ENCODE measurements at regions of chr1 and their contacts with region 1.

Region 1: GRCh38 chr1:150449451-150449850 is 37.8 kb upstream of the TARS2 start:
- DNase-seq: no peak
- ATAC-seq: no peak
- H3K4me3 ChIP-seq: no peak overlapping the region
- H3K27ac ChIP-seq: no peak overlapping the region
- H3K4me1 ChIP-seq: no peaks in the 10 kb centered on the region
- H3K27me3 ChIP-seq: no peaks in the 10 kb centered on the region
- CTCF ChIP-seq: no peak
- POLR2A ChIP-seq: no peak
- RAD21 ChIP-seq: no peak

Region 2: GRCh38 chr1:150397402-150398032 is 51.9 kb before region 1 on chr1:
- CTCF ChIA-PET with region 1: no interaction called
- POLR2A ChIA-PET with region 1: no interaction called
- RAD21 ChIA-PET with region 1: no interaction called
- intact Hi-C with region 1: loop called (anchors 5 kb)
- DNase-seq: no peak
- ATAC-seq: no peak
- H3K4me3 ChIP-seq: no peak overlapping the region
- H3K27ac ChIP-seq: no peak overlapping the region
- H3K4me1 ChIP-seq: peaks cover 6 to 12% of the 10 kb centered on the region in 2 experiments; a peak in 3 of 4 replicates
- H3K27me3 ChIP-seq: no peaks in the 10 kb centered on the region
- CTCF ChIP-seq: no peak
- POLR2A ChIP-seq: no peak
- RAD21 ChIP-seq: no peak